ENCODE measurements at regions of chr2 and their contacts with region 1.

Region 1: DNA sequence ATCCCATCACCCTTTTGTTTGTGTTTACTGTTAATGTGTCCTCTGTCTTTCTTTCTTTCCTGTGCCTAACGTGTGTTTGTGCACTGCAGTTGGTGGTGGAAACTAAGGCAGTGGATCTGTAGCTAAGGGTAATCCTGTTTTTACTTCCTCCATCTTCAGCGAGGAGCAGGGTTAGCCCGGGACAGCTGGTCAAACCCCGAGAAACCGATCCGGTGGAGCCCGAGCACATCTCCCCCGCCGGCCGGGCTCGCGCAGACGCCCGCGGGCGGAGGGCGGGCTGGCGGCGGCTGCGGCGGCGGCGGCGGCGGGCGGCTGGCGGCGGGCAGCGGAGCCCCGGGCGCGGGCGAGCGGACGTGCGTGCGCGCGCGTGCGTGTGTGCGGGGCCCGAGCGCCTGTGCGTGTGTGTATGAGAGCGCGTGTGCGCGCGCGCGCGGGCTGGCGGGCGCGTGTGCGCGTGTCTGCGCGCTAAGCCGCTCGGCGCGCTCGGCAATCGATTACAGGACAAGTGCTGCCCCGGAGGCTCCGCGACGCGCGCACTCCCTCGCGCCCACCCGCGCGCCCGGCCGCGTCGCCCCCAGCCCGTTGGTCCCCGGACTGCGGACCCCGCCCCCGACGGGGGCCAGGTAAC is at the start of gene IKZF2:
- DNase-seq: peak; percentile 84
- H3K4me3 Mint-ChIP-seq: peak within 1 kb of the TSS; percentile 82
- H3K27ac Mint-ChIP-seq: peak within 1 kb of the TSS; percentile 73
- H3K4me1 Mint-ChIP-seq: peaks cover 16% of the 10 kb centered on the region
- H3K27me3 Mint-ChIP-seq: no peaks in the 10 kb centered on the region
- CTCF ChIP-seq: no peak
- total RNA-seq, gene IKZF2: 26.0 and 26.1 TPM in 2 replicates

Region 2: DNA sequence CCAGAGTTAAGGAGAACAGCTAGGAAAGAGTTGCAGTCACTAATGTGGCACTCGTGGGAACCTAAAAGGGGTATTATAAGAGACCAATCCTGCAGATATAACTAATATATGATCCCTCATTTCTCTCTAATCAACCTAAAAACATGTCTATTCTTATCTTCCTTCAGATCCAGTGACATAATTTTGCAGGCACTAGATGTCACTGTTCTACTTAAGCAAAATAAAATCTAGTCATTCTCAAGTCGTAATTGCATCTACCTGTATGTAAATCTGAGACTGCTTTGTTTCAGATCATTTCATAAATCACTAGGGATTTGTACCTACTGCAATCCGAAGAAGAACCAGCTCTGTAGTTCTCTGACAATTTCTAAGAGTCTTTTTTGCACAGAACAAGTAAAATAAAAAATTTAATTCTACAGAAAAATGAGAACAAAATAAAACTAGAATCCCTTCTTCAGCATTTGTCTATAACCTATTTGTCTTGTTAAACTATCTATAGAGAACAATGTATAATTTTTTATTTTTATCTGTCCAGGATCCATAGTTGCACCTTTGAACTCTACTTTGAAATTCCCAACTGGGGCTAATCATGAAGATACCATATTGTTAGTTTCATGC is 556.4 kb before region 1 on chr2:
- CTCF ChIA-PET with region 1: no interaction called
- intact Hi-C with region 1: loop called (anchors 2 kb)
- DNase-seq: no peak
- H3K4me3 Mint-ChIP-seq: no peak overlapping the region
- H3K27ac Mint-ChIP-seq: no peak overlapping the region
- H3K4me1 Mint-ChIP-seq: peaks cover 1% of the 10 kb centered on the region
- H3K27me3 Mint-ChIP-seq: no peaks in the 10 kb centered on the region
- CTCF ChIP-seq: peak; percentile 31

Region 3: GRCh38 chr2:212686285-212686895 is 465.2 kb before region 1 on chr2:
- CTCF ChIA-PET with region 1: interaction called, 5 read pairs
- intact Hi-C with region 1: loop called (anchors 1 kb)
- DNase-seq: peak; percentile 54
- H3K4me3 Mint-ChIP-seq: no peak overlapping the region
- H3K27ac Mint-ChIP-seq: no peak overlapping the region
- H3K4me1 Mint-ChIP-seq: peaks cover 13% of the 10 kb centered on the region
- H3K27me3 Mint-ChIP-seq: no peaks in the 10 kb centered on the region
- CTCF ChIP-seq: peak; percentile 86

Region 4: DNA sequence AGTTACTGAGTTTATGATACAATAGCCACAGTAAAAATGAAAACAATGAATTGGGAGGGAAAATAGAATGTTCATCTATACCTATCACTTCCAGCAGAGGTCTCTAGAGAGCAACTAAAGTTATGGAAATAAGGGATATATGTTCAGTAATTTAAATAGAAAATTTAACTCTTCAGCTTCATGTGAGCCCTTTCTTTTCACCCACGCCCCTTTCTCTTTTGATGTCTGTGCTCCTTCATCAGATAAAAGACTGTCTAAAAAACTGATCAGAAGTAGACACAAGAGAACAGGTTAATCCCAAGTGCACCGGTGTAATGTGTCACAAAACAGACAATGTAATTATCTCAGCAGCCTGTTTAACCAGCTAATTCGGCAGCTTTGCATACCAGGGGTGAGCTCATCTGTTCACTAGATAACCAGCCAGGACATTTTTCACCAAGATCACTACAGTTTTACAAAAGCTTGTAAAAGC is 374.5 kb before region 1 on chr2:
- CTCF ChIA-PET with region 1: interaction called, 10 read pairs
- intact Hi-C with region 1: loop called (anchors 1 kb)
- DNase-seq: peak; percentile 3
- H3K4me3 Mint-ChIP-seq: no peak overlapping the region
- H3K27ac Mint-ChIP-seq: no peak overlapping the region
- H3K4me1 Mint-ChIP-seq: no peaks in the 10 kb centered on the region
- H3K27me3 Mint-ChIP-seq: no peaks in the 10 kb centered on the region
- CTCF ChIP-seq: peak; percentile 25

Region 5: GRCh38 chr2:212863185-212863588 is 288.4 kb before region 1 on chr2:
- CTCF ChIA-PET with region 1: no interaction called
- intact Hi-C with region 1: loop called (anchors 1 kb)
- DNase-seq: peak; percentile 16
- H3K4me3 Mint-ChIP-seq: no peak overlapping the region
- H3K27ac Mint-ChIP-seq: no peak overlapping the region
- H3K4me1 Mint-ChIP-seq: no peaks in the 10 kb centered on the region
- H3K27me3 Mint-ChIP-seq: no peaks in the 10 kb centered on the region
- CTCF ChIP-seq: peak; percentile 73

Region 6: DNA sequence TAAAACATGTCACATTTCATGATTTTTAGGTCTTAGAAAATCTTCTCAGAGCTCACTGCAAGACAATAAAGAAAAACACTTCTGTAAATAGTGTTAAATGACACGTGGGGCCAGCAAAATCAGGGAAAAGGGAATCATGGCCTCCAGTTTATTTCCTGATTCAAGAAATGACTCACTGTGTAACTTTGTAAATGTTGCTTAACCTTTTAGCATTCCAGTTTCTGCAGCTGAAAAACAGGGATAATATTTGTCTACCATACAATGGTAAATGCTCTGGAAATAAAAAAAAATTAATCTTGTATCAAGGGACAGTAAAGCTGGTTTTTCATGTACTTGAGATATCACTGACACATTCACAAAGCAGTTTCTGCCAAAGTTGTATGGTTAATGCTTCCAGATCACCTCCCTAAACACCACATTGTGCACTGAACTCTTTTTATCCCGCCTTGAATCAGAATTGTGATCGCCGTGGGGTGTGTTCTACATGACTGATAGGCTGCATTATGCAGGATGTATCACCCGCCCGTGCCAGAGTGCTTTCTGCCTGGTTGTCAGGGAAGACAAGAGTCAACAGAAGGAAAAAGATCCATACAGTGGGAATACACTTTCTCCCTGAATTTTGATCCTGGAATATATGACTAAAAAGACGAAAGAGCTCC is 239.0 kb before region 1 on chr2:
- CTCF ChIA-PET with region 1: no interaction called
- intact Hi-C with region 1: loop called (anchors 2 kb)
- DNase-seq: peak; percentile 58
- H3K4me3 Mint-ChIP-seq: peak overlapping the region; percentile 63
- H3K27ac Mint-ChIP-seq: peak overlapping the region; percentile 95
- H3K4me1 Mint-ChIP-seq: peaks cover 56% of the 10 kb centered on the region
- H3K27me3 Mint-ChIP-seq: no peaks in the 10 kb centered on the region
- CTCF ChIP-seq: no peak

Region 7: DNA sequence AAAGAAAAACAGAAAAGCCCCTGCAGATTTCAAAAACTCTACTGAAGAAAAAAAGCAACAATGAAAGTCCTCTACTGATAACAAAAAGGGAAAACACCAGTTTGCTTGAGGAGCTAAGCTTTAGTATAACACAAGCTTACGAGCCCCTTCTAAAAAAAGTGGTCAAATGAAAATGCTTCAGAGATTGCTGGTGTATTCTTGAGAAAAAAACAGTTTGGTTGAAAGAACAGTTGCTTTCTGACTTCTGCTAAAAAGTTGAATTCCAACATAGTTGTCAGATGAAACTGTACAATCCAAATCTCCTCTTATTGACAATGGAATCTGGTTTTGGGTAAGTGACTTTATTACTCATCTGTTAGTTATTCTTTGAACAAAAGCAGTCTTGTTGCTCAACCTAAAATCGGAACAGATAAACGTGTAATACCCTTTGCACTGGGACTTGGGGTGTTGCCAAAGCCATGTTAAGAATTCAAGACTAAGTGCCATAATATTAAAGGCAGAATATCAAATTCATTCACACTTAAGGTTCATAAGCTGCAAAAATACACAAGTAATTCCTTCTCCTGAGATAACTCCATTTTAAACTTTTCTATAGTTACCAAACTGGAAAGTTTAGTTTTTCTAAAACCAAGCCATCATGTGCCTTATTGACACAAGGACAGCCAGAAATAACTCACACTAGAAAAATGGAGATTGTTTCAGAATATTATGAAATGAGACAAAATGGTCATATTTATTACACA is 87.4 kb after region 1 on chr2:
- CTCF ChIA-PET with region 1: interaction called, 9 read pairs
- intact Hi-C with region 1: loop called (anchors 1 kb)
- DNase-seq: peak; percentile 77
- H3K4me3 Mint-ChIP-seq: peak overlapping the region; percentile 60
- H3K27ac Mint-ChIP-seq: peak overlapping the region; percentile 99
- H3K4me1 Mint-ChIP-seq: peaks cover 60% of the 10 kb centered on the region
- H3K27me3 Mint-ChIP-seq: no peaks in the 10 kb centered on the region
- CTCF ChIP-seq: no peak